IMR-90 (cell line): ENCODE measurements at regions of chr3 and their contacts with region 1.

Region 1: GRCh38 chr3:180926526-180926925 is 14.1 kb downstream of the FXR1 start:
- DNase-seq: peak; percentile 23
- ATAC-seq: peak; percentile 50
- H3K4me3 ChIP-seq: no peak overlapping the region
- H3K27ac ChIP-seq: no peak overlapping the region
- H3K4me1 ChIP-seq: peaks cover 5% of the 10 kb centered on the region; the same call in 1 of the 2 replicates
- H3K27me3 ChIP-seq: no peaks in the 10 kb centered on the region
- CTCF ChIP-seq: no peak
- POLR2A ChIP-seq: no peak
- RAD21 ChIP-seq: no peak

Region 2: DNA sequence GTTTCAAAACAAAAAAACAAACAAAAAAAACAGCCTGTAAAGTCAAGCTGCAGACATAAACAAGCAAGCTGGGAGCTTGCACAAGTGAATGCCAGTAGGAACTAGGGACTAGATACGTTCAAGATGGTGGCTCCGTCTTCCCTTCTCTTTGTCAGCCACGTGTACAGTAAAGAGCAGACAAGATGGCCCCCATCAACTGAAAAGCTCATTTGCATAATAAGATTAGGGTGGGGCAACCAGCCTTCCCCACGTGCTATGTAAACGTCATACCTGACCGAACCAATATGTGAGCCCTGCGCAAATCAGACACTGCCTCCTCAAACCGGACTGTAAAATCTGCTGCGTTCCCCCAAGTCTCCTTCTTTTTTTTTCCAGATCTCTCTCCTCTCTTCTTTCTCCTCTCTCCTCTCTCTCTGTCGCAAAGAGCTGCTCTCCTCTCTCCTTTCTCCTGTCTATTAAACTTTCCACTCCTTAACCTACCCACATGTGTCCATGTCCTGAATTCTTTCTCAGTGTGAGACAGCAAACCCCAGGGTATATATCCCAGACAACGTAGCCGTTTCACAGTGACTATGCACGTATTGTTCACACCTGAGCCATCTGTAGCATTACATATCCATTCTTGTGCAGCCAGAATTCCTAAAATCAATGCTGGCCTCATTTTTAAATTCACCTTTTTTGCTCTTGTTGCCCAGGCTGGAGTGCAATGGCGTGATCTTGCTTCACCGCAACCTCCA is 45.3 kb before region 1 on chr3:
- CTCF ChIA-PET with region 1: no interaction called
- POLR2A ChIA-PET with region 1: no interaction called
- dilution Hi-C with region 1: no loop called
- in situ Hi-C with region 1: no loop called
- intact Hi-C with region 1: no loop called
- DNase-seq: no peak
- ATAC-seq: no peak
- H3K4me3 ChIP-seq: no peak overlapping the region
- H3K27ac ChIP-seq: no peak overlapping the region
- H3K4me1 ChIP-seq: no peaks in the 10 kb centered on the region
- H3K27me3 ChIP-seq: no peaks in the 10 kb centered on the region
- CTCF ChIP-seq: no peak
- POLR2A ChIP-seq: no peak
- RAD21 ChIP-seq: no peak

Region 3: DNA sequence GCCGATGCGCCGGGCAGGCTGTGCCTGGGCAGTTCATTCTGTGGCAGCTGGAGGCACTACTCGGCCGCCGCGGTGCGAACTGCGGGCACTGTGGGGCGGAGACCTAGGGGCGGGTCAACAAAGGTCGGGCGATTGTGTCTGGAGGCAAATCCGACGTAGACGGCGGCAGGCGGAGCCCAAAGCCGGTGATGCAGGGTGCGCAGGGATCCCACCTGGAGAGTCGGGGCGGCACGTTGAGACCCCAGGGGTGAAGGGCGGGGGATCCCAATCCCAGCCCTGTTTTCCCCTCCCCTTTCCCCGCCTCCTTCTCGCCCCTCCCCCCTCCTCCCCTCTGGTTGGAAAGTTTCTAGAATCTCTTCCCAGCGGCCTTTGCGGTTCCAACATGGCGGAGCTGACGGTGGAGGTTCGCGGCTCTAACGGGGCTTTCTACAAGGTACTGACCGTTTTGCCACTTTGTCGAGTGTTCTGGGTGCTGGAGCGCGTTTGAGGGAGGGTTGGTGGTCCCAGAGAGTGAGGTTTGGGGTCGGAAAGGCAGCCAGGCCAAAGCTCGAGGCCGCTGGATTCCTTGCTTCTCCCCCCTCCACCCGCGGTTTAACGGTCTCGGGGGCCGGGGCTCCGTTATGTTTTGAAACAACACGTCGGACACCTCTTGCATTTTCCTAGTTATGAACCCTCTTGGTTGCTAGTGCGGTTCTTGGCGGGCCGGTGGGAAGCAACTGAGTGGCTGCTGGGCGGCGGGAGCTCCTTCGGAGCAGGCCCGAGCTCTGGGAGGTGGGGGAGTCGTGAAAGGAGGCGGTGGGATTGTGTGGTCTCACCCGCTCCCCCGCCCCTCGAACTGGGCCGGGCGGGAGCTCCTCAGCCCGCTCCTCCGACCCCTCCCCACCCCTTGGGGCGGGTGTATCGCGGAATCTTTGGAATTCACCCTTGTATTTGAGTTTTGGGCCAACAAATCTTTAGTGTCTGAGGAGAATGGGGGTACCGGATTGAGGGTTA is 13.9 kb before region 1 on chr3 and contains the start of gene FXR1:
- CTCF ChIA-PET with region 1: no interaction called
- POLR2A ChIA-PET with region 1: no interaction called
- dilution Hi-C with region 1: no loop called
- in situ Hi-C with region 1: no loop called
- intact Hi-C with region 1: loop called (anchors 2 kb)
- DNase-seq: peak; percentile 69
- ATAC-seq: peak; percentile 98
- H3K4me3 ChIP-seq: peak within 1 kb of the TSS; percentile 99
- H3K27ac ChIP-seq: peak within 1 kb of the TSS; percentile 99
- H3K4me1 ChIP-seq: no peaks in the 10 kb centered on the region
- H3K27me3 ChIP-seq: no peaks in the 10 kb centered on the region
- CTCF ChIP-seq: peak; percentile 57
- POLR2A ChIP-seq: peak; percentile 94
- RAD21 ChIP-seq: peak; percentile 37
- total RNA-seq, gene FXR1: 182 and 242 TPM in 2 replicates

Region 4: GRCh38 chr3:181210275-181210674 is 283.7 kb after region 1 on chr3:
- CTCF ChIA-PET with region 1: no interaction called
- POLR2A ChIA-PET with region 1: no interaction called
- dilution Hi-C with region 1: no loop called
- in situ Hi-C with region 1: no loop called
- intact Hi-C with region 1: no loop called
- DNase-seq: peak; percentile 15
- ATAC-seq: no peak
- H3K4me3 ChIP-seq: no peak overlapping the region
- H3K27ac ChIP-seq: no peak overlapping the region
- H3K4me1 ChIP-seq: no peaks in the 10 kb centered on the region
- H3K27me3 ChIP-seq: no peaks in the 10 kb centered on the region
- CTCF ChIP-seq: 0 out of 2 replicates have a peak, but pooled peaks have one; percentile 30
- POLR2A ChIP-seq: no peak
- RAD21 ChIP-seq: peak; percentile 18; the same call in 1 of the 2 replicates